Left colon (tissue), 2 donors: ENCODE measurements at regions of chr2 and their contacts with region 1.

Region 1: GRCh38 chr2:128086244-128086643 is 4.8 kb upstream of the UGGT1 start:
- DNase-seq: no peak
- ATAC-seq: no peak

Region 2: DNA sequence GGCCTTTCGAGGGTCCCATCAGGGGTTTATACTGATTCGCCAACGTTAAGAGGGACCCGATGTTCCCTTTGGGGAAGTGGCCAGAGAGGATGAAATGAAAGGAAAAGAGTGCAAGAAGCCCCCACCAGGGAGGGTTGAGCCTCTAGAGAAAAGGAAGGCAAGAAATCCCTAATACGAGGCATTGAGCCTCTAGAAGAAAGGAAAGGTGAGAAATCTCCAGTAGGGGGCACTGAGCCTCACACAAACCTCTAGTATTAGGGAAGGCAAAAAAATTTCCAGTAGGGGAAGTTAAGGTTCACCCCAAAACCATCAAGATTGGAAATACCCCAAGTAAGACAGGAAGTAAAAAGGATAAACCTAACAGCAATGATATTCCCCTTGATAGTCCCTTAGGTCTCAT is 48.6 kb before region 1 on chr2:
- intact Hi-C with region 1: loop called in 1 of 2 experiments (anchors 10 kb)
- DNase-seq: no peak
- ATAC-seq: no peak